GM12878 (cell line): ENCODE measurements at regions of chr11 and their contacts with region 1.

Region 1: GRCh38 chr11:16958833-16959232 is 55.4 kb downstream of the PLEKHA7 start:
- DNase-seq: no peak
- ATAC-seq: peak; percentile 58
- H3K4me3 ChIP-seq: no peak overlapping the region
- H3K27ac ChIP-seq: no peak overlapping the region
- H3K4me1 ChIP-seq: peaks cover 9% of the 10 kb centered on the region
- H3K27me3 ChIP-seq: no peaks in the 10 kb centered on the region
- CTCF ChIP-seq: no peak
- EP300 ChIP-seq: no peak
- POLR2A ChIP-seq: no peak
- RAD21 ChIP-seq: no peak

Region 2: DNA sequence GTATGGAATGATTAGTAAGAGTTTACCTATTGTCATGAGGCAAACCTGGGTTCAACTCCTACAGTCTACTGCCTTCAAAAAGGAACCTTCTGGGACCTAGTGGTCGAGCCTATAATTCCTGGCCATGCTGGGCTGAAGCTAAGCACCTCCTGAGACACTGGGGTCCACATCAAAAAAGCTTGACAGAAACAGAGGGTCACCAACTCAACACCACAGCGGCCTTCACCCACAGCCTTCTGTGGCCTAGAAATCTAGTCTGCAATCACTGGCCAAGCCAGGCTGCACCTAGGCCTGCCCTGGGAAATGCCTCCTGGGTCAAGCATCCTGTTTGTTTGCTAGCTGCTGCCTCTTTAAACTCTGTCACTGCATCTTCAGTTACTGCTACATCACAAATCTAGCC is 374.3 kb before region 1 on chr11:
- CTCF ChIA-PET with region 1: no interaction called
- POLR2A ChIA-PET with region 1: no interaction called
- RAD21 ChIA-PET with region 1: no interaction called
- SMC1A ChIA-PET with region 1: no interaction called
- in situ Hi-C with region 1: no loop called
- intact Hi-C with region 1: no loop called
- DNase-seq: no peak
- ATAC-seq: no peak
- H3K4me3 ChIP-seq: no peak overlapping the region
- H3K27ac ChIP-seq: no peak overlapping the region
- H3K4me1 ChIP-seq: no peaks in the 10 kb centered on the region
- H3K27me3 ChIP-seq: no peaks in the 10 kb centered on the region
- CTCF ChIP-seq: no peak
- EP300 ChIP-seq: no peak
- POLR2A ChIP-seq: no peak
- RAD21 ChIP-seq: no peak

Region 3: GRCh38 chr11:16969010-16969999 is 10.5 kb after region 1 on chr11:
- CTCF ChIA-PET with region 1: interaction called, 4 read pairs
- POLR2A ChIA-PET with region 1: no interaction called
- RAD21 ChIA-PET with region 1: interaction called, 5 read pairs
- SMC1A ChIA-PET with region 1: interaction called, 12 read pairs
- in situ Hi-C with region 1: no loop called
- intact Hi-C with region 1: no loop called
- DNase-seq: no peak
- ATAC-seq: no peak
- H3K4me3 ChIP-seq: no peak overlapping the region
- H3K27ac ChIP-seq: no peak overlapping the region
- H3K4me1 ChIP-seq: no peaks in the 10 kb centered on the region
- H3K27me3 ChIP-seq: no peaks in the 10 kb centered on the region; a peak in 1 of 4 replicates
- CTCF ChIP-seq: no peak
- EP300 ChIP-seq: no peak
- POLR2A ChIP-seq: no peak
- RAD21 ChIP-seq: no peak